Ascending aorta (tissue), 2 donors: ENCODE measurements at regions of chr7 and their contacts with region 1.

Region 1: DNA sequence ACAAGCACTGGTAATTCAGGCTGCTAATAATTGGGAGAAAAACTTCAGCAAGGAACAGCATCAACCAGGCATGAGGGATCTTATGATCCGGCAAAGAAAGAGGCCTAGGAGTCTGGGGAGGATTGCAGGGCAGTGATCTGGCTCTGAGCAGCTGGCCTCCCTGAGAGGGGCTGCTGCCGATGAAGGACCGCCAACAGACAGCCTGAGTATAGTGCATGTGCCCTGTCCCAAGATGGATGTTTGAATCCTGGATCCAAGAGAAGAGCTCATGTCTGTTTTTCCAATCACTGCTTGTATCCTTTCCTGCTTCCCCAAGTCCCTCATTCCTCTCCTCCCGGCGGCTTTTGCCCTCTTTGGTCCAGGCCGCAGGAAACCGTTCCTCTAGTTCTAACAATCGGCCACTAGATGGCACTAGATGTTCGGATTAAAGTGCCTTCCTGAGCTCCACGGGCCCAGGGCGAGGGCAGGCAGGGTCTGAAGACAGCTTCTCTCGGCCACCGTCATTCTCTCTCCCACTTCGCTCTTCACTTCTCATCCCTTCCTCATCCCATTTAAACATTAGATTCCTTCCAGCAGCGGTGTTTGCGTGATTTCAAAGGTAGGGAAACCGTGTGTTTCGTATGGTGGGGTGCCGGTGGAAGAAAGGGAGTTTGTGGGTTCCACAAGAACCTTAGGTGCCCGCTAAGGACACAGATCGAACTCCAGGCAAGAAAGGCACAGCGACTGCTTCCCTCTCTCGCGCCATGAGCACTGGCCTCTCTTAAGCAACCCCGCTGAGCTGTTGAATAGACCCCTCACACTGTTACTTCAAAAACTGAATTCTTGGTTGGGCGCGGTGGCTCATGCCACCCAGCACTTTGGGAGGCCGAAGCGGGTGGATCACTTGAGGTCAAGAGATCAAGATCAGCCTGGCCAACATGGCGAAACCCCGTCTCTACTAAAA is 82.4 kb downstream of the ADCYAP1R1 start:
- DNase-seq: peak in 1 of 2 donors; percentile 76
- H3K4me3 ChIP-seq: no peak overlapping the region
- H3K27ac ChIP-seq: no peak overlapping the region
- H3K4me1 ChIP-seq: no peaks in the 10 kb centered on the region
- H3K27me3 ChIP-seq: no peaks in the 10 kb centered on the region
- CTCF ChIP-seq: peak; percentile 44 to 69 (median 66)

Region 2: DNA sequence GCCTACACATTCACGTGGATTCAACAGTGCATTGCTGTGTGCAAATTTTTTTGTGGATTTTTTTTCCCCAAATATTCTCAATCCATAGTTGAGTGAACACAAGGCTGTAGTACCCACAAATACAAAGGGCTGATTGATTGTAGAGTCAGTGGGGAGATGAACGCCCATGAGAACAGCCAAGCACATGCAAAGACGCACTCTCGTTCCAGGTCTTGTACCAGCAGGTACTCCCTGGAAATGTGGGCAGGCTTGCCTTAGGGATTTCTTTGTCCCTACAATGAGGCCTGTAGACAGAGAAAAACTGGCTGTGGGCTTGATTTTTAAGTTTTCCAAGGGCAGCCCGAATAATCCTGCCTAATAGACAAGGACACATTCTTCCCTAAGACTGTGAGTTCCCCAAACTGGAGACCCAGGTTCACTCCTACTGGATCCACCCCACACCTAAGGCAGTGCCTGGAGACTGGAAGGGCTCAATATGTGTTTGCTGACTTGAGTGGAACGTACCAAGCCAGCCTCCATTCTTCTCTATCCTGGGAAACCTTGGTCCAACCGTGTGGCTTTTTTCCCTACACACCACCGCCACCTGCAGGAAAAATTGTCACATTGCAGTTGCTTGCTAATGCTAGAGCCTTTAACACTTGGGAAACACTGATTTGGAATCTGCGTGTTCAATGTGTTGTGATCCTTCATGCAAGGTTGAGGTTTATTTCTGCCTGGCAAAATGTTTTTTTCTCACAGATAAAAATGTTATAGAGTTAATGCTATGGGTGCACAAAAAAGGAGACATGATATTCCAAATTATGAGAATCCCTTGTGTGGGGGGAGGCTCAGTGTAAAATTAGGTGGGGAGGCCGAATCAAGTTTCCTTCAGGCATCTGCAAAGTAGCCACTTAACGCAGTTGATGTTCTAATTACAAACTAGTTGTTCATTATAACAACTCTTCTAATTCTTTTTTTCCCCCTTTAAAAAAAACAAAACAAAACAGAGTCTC is 601.8 kb after region 1 on chr7:
- intact Hi-C with region 1: loop called (anchors 2 kb)
- DNase-seq: no peak
- H3K4me3 ChIP-seq: no peak overlapping the region
- H3K27ac ChIP-seq: no peak overlapping the region
- H3K4me1 ChIP-seq: no peaks in the 10 kb centered on the region
- H3K27me3 ChIP-seq: no peaks in the 10 kb centered on the region
- CTCF ChIP-seq: peak; percentile 62 to 78 (median 72)